HCT116 (cell line): ENCODE measurements at regions of chr7 and their contacts with region 1.

Region 1: GRCh38 chr7:78039790-78040776 is 241.5 kb downstream of the PHTF2 start:
- DNase-seq: peak; percentile 23
- ATAC-seq: peak; percentile 99
- H3K4me3 ChIP-seq: peak overlapping the region in 1 of 2 experiments; percentile 42; a peak in 2 of 4 replicates
- H3K27ac ChIP-seq: no peak overlapping the region
- H3K4me1 ChIP-seq: peaks cover 0 to 8% of the 10 kb centered on the region in 2 experiments; a peak in 2 of 4 replicates
- H3K27me3 ChIP-seq: no peaks in the 10 kb centered on the region
- CTCF ChIP-seq: peak; percentile 69 to 92 (median 81)
- POLR2A ChIP-seq: no peak
- RAD21 ChIP-seq: peak; percentile 64

Region 2: GRCh38 chr7:77657427-77658224 is 382.5 kb before region 1 on chr7:
- CTCF ChIA-PET with region 1: no interaction called
- POLR2A ChIA-PET with region 1: no interaction called
- RAD21 ChIA-PET with region 1: no interaction called
- intact Hi-C with region 1: loop called (anchors 5 kb)
- DNase-seq: peak; percentile 35
- ATAC-seq: peak; percentile 78
- H3K4me3 ChIP-seq: no peak overlapping the region
- H3K27ac ChIP-seq: no peak overlapping the region
- H3K4me1 ChIP-seq: no peaks in the 10 kb centered on the region
- H3K27me3 ChIP-seq: no peaks in the 10 kb centered on the region
- CTCF ChIP-seq: peak; percentile 43 to 75 (median 58); a peak in 5 of 6 replicates
- POLR2A ChIP-seq: no peak
- RAD21 ChIP-seq: peak; percentile 85

Region 3: DNA sequence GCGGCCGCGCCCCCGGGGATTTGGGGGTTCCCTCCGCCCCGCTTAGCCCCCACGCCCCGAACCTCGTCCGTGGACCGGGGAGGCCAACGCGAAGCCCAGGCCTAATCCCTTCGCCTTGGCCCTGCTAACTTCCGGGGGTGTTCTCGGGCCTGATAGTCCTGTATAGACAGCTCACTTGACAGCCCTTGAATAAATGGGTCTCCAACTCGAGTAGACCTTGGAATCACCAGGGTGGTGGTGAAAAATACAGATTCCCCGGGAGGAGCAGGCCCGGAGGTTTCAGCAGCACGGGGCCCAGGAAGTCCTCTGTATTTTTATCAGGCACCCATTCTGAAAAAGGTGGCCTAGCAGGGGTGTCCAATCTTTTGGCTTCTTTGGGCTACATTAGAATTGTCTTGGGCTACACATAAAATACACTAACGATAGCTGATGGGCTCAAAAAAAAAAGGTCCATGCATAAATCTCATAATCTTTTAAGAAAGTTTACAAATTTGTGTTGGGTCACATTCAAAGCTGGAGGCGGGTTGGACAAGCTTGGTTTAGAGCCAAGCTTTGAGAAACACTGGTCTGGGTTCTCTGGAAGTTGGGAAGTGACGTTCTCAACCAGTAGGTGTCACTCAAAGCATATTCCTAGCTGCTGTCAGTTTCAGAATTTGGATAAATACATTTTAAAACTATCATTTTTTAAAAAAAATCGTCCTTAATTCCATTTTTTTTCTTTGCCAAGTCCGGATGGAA is 19.8 kb before region 1 on chr7:
- CTCF ChIA-PET with region 1: interaction called, 23 read pairs
- POLR2A ChIA-PET with region 1: no interaction called
- RAD21 ChIA-PET with region 1: no interaction called
- intact Hi-C with region 1: no loop called
- DNase-seq: peak; percentile 45
- ATAC-seq: peak; percentile 71
- H3K4me3 ChIP-seq: peak overlapping the region; percentile 24 to 27; a peak in 3 of 4 replicates
- H3K27ac ChIP-seq: peak overlapping the region; percentile 15; the same call in 1 of the 2 replicates
- H3K4me1 ChIP-seq: peaks cover 0 to 8% of the 10 kb centered on the region in 2 experiments; a peak in 3 of 4 replicates
- H3K27me3 ChIP-seq: peaks cover 7% of the 10 kb centered on the region; the same call in 1 of the 2 replicates
- CTCF ChIP-seq: peak; percentile 55 to 70 (median 64); a peak in 5 of 6 replicates
- POLR2A ChIP-seq: peak; percentile 11
- RAD21 ChIP-seq: peak; percentile 81

Region 4: GRCh38 chr7:78329001-78329655 is 289.0 kb after region 1 on chr7:
- CTCF ChIA-PET with region 1: no interaction called
- POLR2A ChIA-PET with region 1: no interaction called
- RAD21 ChIA-PET with region 1: no interaction called
- intact Hi-C with region 1: no loop called
- DNase-seq: no peak
- ATAC-seq: no peak
- H3K4me3 ChIP-seq: no peak overlapping the region
- H3K27ac ChIP-seq: no peak overlapping the region
- H3K4me1 ChIP-seq: no peaks in the 10 kb centered on the region
- H3K27me3 ChIP-seq: peaks cover 14% of the 10 kb centered on the region; the same call in 1 of the 2 replicates
- CTCF ChIP-seq: no peak
- POLR2A ChIP-seq: no peak
- RAD21 ChIP-seq: no peak